Mammary epithelial cell (primary cell): ENCODE measurements at regions of chr15 and their contacts with region 1.

Region 1: DNA sequence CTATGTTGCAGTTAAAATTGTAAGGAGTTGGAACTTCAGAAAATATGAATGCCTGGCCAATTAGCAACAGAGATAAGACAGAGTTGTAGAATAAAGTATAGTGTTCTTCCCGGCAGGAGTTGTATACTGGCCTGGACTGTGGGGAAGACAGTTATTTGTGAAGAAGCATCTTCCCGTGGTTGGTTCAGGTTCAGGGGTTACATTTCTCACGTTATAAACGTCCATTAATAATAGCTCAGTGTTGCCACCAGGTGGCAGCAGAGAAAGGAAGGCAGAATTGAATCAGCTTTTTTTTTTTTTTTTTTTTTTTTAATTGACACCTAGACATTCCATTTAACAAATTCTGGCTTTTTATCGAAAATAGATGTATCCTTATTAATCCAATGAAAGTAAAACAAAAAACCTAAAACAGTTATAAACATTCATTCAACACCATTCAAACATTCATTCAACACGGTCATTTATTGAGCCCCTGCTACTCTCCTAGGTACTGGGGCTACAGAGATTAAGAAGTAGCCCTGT is 66.4 kb upstream of the NR2E3 start:
- DNase-seq: peak; percentile 21
- H3K4me3 ChIP-seq: no peak overlapping the region
- H3K27ac ChIP-seq: no peak overlapping the region
- H3K4me1 ChIP-seq: peaks cover 27% of the 10 kb centered on the region
- H3K27me3 ChIP-seq: no peaks in the 10 kb centered on the region
- CTCF ChIP-seq: peak; percentile 57 to 71

Region 2: GRCh38 chr15:71215126-71215894 is 528.6 kb before region 1 on chr15:
- CTCF ChIA-PET with region 1: no interaction called
- dilution Hi-C with region 1: no loop called
- in situ Hi-C with region 1: no loop called
- intact Hi-C with region 1: no loop called
- DNase-seq: no peak
- H3K4me3 ChIP-seq: no peak overlapping the region
- H3K27ac ChIP-seq: no peak overlapping the region
- H3K4me1 ChIP-seq: peaks cover 11% of the 10 kb centered on the region
- H3K27me3 ChIP-seq: no peaks in the 10 kb centered on the region
- CTCF ChIP-seq: no peak

Region 3: DNA sequence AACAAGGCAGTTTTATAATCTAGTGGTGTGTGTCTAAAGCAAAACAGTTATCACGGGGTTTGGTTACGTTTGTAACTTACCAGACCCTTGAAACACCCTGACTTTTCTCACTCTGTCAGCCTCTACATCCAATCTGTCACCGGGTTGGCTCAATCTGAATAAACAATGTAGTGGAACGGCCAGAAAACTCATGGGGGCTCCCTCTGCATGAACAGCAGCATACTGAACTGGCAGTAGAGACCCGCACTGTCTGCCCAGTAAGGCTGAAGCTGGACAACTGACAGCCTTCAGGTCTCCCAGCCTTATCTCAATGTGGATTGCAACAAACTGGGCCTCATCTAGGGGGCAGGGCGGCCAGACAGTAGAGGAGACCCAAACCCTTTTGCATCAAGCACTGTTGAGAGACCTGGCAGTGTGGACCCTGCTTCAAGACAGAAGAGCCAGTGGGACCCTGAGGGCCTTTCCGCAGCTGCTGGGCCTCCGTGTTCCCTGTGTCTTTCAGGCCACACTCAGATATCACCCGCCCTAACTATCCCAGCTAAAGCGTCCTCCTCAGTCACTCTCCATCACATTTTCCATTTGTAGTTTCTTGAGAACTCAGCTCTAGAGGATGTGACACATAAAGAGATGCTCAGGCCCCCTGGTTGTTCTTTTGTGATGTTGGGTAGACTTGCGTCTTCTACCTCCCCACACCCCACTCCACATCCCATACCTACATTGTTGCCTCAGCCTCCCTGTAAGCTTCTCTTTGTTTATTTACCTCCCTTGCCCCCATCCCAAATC is 114.7 kb before region 1 on chr15:
- CTCF ChIA-PET with region 1: interaction called, 16 read pairs
- dilution Hi-C with region 1: no loop called
- in situ Hi-C with region 1: no loop called
- intact Hi-C with region 1: no loop called
- DNase-seq: no peak
- H3K4me3 ChIP-seq: no peak overlapping the region
- H3K27ac ChIP-seq: no peak overlapping the region
- H3K4me1 ChIP-seq: no peaks in the 10 kb centered on the region
- H3K27me3 ChIP-seq: no peaks in the 10 kb centered on the region
- CTCF ChIP-seq: no peak

Region 4: DNA sequence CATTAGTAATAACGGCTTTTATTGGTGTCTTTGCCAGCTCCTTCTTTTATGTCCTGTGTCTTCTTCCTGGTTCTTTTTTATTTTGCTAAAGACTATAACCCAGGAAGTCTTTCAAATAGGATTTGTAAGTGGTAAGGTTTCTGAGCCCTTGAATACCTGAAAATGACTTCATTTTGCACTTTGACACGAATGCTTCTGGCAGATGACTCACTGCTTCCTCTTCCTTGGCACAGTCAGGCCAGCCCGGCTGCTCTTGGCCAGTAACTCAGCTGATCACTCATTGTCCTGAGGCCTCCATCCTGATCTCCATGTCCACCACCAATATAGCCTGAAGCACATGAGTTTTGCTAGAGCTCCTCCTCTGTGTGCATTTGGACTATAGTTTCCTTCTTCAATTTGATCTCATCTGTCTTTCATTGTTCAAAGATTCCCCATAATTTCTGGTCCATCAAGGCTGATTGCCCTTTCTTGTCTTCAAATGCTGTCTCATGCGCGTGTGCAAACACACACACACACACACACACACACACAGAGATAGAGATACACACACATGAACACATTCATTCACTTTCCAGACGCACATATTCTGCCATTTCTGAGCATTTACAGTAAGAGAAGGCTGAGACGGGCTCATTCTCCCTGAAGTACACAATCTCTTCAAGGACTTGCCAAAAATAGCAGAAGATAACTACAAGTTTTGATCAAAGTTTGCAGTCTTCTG is 17.9 kb after region 1 on chr15:
- CTCF ChIA-PET with region 1: interaction called, 24 read pairs
- dilution Hi-C with region 1: no loop called
- in situ Hi-C with region 1: no loop called
- intact Hi-C with region 1: no loop called
- DNase-seq: peak; percentile 82
- H3K4me3 ChIP-seq: no peak overlapping the region
- H3K27ac ChIP-seq: no peak overlapping the region
- H3K4me1 ChIP-seq: peaks cover 9% of the 10 kb centered on the region
- H3K27me3 ChIP-seq: no peaks in the 10 kb centered on the region
- CTCF ChIP-seq: no peak